Heart right ventricle (tissue), 16 donors: ENCODE measurements at regions of chr5 and their contacts with region 1.

Region 1: GRCh38 chr5:108557686-108558085 is 175.8 kb upstream of the FBXL17 start:
- DNase-seq: no peak
- ATAC-seq: no peak
- H3K4me3 ChIP-seq: no peak overlapping the region
- H3K27ac ChIP-seq: no peak overlapping the region
- H3K4me1 ChIP-seq: peaks cover 0 to 7% (median 0%) of the 10 kb centered on the region in 9 donors
- H3K27me3 ChIP-seq: no peaks in the 10 kb centered on the region
- CTCF ChIP-seq: no peak

Region 2: DNA sequence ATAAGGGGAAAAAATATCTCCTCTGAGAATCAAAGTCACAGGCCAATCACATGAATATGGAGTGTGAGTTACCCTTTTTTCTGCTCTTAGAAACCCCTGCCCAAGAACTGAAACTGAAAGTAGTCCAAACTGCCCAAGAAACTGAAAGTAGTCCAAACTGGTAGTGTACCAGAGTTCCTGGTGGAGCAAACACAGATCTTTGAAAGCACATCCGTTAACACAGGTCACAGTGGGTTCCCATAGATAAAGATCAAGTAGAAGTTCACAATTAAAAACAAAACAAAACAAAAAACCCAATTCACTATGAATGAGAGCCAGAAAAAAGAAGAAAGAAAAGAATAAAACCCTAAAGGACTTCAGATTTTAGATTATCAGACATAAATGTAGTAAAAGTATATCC is 554.5 kb before region 1 on chr5:
- intact Hi-C with region 1: loop called in 1 of 10 experiments (anchors 5 kb)
- DNase-seq: no peak
- ATAC-seq: peak in 7 of 8 donors; percentile 49 to 78 (median 71)
- H3K4me3 ChIP-seq: peak overlapping the region in 6 of 10 donors; percentile 2 to 24 (median 14)
- H3K27ac ChIP-seq: peak overlapping the region in 1 of 10 donors; percentile 36
- H3K4me1 ChIP-seq: peaks cover 0 to 10% (median 0%) of the 10 kb centered on the region in 9 donors
- H3K27me3 ChIP-seq: no peaks in the 10 kb centered on the region
- CTCF ChIP-seq: no peak

Region 3: DNA sequence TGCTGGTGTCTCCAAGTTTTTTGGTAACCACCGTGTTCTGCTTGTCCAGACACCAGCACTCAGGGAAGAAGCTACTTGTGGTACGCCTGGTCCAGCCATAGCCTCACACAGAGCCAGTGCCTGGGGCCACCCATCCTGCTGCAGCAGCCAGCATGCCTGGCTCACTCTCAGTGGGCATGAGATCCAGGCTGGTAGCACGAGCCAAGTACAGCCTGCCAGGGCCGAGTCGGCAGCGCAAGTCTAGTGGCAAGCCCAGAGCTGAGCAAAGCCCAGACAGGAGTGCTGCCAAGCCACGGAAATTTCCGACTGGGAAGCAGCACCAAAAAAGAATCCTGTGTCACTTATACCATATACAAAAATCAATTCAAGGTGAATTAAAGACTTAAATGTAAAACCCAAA is 139.5 kb before region 1 on chr5:
- intact Hi-C with region 1: no loop called
- DNase-seq: peak; percentile 45 to 75
- ATAC-seq: peak; percentile 67 to 99 (median 93)
- H3K4me3 ChIP-seq: no peak overlapping the region
- H3K27ac ChIP-seq: no peak overlapping the region
- H3K4me1 ChIP-seq: no peaks in the 10 kb centered on the region
- H3K27me3 ChIP-seq: no peaks in the 10 kb centered on the region
- CTCF ChIP-seq: no peak